ENCODE measurements at regions of chr16 and their contacts with region 1.

Region 1: DNA sequence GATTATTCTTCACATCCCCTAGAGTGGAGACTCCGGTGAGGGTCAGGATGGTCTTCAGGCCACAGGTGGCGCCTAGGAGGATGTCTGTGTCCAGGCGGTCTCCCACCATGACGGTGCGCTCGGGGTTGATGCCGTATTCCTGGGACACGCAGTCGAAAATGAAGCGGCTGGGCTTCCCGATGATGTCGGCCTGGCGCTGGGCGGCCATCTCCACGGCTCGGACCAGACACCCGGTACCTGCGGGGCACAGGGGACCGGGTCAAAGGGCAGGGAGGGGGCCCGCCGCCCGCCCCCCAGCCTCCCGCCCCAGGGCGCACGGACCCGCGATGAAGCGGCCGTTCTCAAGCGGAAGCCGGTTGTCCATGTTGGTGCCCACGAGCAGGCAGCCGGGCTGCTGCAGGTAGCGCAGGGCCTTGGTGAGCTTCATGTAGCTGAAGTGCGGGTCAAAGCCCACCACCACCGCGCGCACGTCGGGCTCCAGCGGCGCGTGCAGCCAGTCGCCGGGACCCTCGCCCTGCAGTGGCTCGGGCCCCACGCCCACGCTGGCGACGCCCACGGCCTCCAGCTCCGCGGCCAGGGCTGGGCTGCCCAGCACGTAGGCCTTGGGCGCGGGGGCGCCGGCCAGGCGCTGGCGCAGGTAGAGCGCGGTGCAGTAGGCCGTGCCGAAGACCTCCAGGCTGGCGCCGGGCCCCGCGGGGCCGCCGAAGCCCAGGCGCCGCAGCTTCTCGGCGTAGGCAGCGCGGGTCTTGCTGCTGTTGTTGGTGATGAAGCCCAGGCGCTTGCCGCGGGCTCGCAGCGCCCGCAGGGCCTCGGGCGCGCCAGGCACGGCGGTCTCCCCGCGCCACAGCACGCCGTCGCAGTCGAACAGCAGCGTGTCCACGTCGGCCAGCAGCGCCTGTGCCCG is 571 bp downstream of the PGP start:
- DNase-seq: no peak
- H3K4me3 ChIP-seq: peak overlapping the region; percentile 57 to 92 (median 79)
- H3K27ac ChIP-seq: peak overlapping the region in 55 of 59 donors; percentile 41 to 100 (median 82)
- H3K27me3 ChIP-seq: no peaks in the 10 kb centered on the region
- CTCF ChIP-seq: no peak

Region 2: DNA sequence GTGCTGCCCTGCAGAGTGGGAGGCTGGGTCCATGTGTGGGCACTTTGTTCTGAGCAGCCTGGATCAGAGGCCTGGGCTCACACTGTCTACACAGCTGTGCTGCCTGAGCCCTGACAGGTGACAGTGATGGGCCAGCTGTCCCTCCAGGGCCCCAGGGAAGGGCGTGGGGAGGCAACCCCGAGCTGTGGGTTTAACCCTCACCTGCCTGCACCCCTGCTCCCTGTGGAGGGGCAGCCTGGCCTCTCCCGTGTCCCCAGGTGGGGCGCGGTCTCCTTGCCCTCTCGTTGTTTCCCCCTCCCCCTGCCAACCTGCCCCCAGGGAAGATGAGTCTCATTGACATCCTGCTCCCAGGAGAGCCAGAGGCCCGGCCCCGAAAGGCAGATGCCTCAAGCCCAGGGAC is 1374.1 kb before region 1 on chr16:
- intact Hi-C with region 1: no loop called
- DNase-seq: no peak
- H3K4me3 ChIP-seq: no peak overlapping the region
- H3K27ac ChIP-seq: no peak overlapping the region
- H3K27me3 ChIP-seq: no peaks in the 10 kb centered on the region
- CTCF ChIP-seq: no peak

Region 3: DNA sequence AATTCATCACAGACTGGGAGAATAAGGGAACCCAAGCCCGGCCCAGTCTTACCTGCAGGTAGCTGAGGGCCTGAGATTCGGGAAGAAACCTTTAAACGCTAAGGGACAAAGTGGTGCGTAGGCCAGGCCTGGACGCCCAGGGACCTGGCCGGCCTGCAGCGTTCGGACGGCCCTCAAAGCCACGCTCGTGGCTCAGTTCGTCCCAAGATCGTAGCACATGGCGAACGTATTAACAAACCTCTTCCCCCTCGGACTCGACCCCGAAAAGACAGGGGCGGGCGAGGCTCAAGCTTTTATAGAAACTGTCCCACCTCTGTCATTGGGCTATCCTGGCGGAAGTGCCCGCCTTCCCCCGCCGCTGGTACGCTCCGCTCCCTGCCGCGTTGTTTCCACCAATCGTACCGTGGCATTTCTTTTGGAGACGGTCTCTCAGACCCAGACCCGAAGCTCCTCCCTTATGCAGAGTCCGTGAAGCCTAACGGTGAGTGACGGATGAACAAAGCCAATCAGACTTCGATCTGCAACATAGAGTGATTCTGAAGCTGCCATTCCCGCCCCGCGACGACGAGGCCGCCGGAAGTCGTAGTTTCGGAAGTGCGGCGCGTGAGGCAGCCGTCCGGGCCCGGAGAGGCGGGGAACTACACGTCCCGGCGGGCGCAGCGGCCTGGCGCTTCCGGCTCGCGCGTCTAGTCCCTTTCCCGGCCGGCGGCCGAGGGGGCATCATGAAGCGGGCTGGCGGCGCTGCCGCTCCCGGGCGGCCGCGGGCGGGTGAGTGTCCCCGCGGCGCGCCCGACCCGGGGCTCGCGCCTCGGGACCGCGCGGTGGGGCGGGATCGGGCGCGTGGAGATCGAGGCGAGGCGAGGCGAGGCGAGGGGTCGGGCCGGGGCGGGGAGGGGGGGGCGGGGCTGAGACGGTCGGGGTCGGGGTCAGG is 58.7 kb before region 1 on chr16 and contains the start of gene TRAF7:
- intact Hi-C with region 1: loop called in 1 of 2 experiments (anchors 2 kb)
- DNase-seq: peak; percentile 95 to 100 (median 99)
- H3K4me3 ChIP-seq: peak within 1 kb of the TSS; percentile 57 to 99 (median 90)
- H3K27ac ChIP-seq: peak within 1 kb of the TSS in 57 of 59 donors; percentile 22 to 94 (median 82)
- H3K27me3 ChIP-seq: no peaks in the 10 kb centered on the region
- CTCF ChIP-seq: peak in 26 of 56 donors; percentile 7 to 67 (median 28)
- total RNA-seq, gene TRAF7: 26.2 to 67.2 (median 41.0) TPM

Region 4: GRCh38 chr16:2166757-2167638 is 47.1 kb before region 1 on chr16:
- intact Hi-C with region 1: no loop called
- DNase-seq: no peak
- H3K4me3 ChIP-seq: no peak overlapping the region
- H3K27ac ChIP-seq: no peak overlapping the region
- H3K27me3 ChIP-seq: no peaks in the 10 kb centered on the region
- CTCF ChIP-seq: no peak